ENCODE measurements at regions of chr9 and their contacts with region 1.

Region 1: DNA sequence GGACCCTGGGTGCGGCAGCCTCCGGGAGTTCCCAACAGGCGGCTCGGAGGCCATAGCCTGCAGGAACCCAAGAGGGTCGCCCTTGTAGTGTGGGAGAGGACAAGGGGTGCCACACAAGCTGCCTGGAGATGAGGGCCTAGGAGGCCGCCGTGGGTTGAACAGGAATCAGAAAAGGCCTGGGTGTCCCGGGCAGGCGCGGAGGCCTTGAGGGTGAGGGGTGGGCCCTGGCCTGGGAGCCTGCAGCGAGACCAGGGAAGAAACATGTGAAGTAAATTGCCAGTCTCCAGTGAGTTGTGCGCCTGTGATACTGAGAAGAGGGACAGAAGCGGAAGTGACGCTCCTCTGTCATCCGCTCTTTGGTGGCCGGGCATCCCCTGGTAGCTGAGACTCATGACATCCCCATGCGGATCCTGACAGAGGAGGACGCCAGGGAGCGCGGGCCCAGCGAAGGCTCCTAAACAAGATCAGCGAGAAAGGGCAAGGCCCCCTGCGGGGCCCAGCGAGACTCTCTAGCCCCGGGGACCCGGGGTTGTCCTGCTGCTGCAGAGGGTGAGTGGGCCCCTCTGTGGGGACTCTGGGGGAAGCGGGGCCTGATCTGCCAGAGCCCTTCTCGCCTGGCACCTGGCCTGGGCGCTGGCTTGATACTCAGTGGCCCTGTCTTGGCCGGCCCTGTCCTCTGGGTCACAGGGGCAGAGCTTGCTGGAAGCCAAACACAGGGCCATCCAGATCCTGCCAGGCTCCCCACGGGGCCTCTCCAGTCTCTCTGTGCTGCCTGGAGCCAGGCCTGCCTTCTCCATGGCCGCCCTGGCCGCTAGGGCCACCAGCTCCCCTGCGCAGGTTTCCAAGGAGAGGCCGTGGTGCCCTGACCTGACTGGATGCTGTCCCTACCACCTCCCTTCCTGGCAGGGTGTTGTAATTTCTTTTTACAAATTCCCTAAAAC is 788.4 kb downstream of the TLE4 start:
- DNase-seq: no peak
- H3K4me3 ChIP-seq: no peak overlapping the region
- H3K27ac ChIP-seq: no peak overlapping the region
- H3K4me1 ChIP-seq: no peaks in the 10 kb centered on the region
- H3K27me3 ChIP-seq: no peaks in the 10 kb centered on the region
- CTCF ChIP-seq: no peak
- POLR2A ChIP-seq: no peak

Region 2: DNA sequence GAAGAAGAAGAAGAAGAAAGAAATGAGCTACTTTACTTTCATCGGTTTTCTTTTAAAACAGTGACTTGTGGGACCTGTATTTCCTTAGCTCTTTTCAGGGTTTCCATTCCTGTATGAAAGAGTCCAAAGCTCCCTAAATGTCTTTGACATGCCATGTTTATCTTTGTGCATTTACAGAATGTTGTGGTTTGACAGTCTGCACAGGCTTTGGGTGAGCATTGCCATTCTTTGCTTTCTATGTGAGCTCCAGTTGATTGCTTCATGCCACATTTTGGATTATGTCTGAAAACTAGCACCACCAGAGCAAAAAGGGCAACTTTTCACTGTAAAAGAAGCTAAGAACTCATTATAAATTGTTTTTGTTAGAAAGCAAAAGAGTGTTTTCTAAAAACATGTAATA is 55.1 kb before region 1 on chr9:
- intact Hi-C with region 1: loop called (anchors 5 kb)
- DNase-seq: no peak
- H3K4me3 ChIP-seq: no peak overlapping the region
- H3K27ac ChIP-seq: no peak overlapping the region
- H3K4me1 ChIP-seq: peaks cover 0 to 5% (median 0%) of the 10 kb centered on the region in 3 donors
- H3K27me3 ChIP-seq: no peaks in the 10 kb centered on the region
- CTCF ChIP-seq: no peak
- POLR2A ChIP-seq: no peak

Region 3: DNA sequence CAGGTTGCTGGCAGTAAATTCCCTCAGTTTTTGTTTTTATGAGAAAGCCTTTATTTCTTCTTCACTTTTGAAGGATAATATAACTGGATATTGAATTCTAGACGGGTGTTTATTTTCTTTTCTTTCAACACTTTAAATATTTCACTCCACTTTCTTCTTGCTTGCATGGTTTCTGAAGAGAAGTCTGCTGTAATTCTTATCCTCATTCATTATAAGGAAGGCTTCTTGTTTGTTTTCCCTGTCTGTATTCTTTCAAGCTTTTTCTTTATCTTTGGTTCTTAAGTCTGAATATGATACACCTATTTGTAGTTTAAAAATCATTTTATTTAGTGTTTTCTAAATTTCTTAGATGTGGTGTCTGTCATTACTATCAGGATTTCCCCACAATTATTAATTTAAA is 274.9 kb after region 1 on chr9:
- intact Hi-C with region 1: no loop called
- DNase-seq: no peak
- H3K4me3 ChIP-seq: no peak overlapping the region
- H3K27ac ChIP-seq: no peak overlapping the region
- H3K4me1 ChIP-seq: no peaks in the 10 kb centered on the region
- H3K27me3 ChIP-seq: no peaks in the 10 kb centered on the region
- CTCF ChIP-seq: no peak
- POLR2A ChIP-seq: no peak

Measured in esophagus squamous epithelium (tissue), 5 donors.